CD14-positive monocyte (primary cell): ENCODE measurements at regions of chr9 and their contacts with region 1.

Region 1: DNA sequence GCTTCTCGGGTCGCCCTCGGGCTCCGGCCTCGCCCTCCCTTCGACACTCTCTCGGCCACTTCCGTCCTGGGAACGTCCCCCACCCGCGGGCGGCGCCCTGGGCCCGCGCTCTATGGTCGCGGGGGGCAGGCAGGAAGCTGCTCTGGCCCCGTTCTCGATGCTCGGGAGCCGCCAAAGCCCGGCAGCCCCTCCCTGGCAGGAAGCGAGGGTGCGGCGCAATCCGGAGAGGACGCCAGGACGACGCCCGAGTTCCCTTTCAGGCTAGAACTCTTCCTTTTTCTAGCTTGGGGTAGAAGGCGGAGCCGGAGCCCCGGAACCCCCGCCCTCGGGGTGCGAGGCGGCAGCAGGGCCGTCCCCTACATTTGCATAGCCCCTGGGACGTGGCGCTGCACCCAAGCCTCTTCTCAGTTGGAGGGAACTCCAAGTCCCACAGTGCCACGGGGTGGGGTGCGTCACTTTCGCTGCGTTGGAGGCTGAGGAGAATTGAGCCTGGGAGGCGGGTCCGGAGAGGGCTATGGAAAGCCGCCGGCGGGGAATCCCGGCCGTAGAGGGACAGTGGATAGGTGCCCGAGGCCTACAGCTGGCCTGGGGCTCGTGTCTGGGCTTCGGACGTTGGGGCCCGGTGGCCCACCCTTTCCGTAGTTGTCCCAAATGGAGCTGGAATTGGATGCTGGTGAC is at the starts of genes CREB3 and TLN1:
- DNase-seq: peak; percentile 98 to 99 (median 98)
- H3K4me3 ChIP-seq: peak within 1 kb of the TSS; percentile 84 to 95 (median 85)
- H3K4me3 Mint-ChIP-seq: peak within 1 kb of the TSS in 1 of 2 donors; percentile 92
- H3K27ac ChIP-seq: peak within 1 kb of the TSS; percentile 89 to 95
- H3K27ac Mint-ChIP-seq: peak within 1 kb of the TSS in 6 of 7 donors; percentile 94 to 99 (median 96)
- H3K4me1 ChIP-seq: peaks cover 57 to 65% of the 10 kb centered on the region in 2 donors
- H3K4me1 Mint-ChIP-seq: peaks cover 21% of the 10 kb centered on the region
- H3K27me3 ChIP-seq: no peaks in the 10 kb centered on the region
- H3K27me3 Mint-ChIP-seq: peaks cover 0 to 5% (median 0%) of the 10 kb centered on the region in 3 donors
- CTCF ChIP-seq: no peak
- polyA plus RNA-seq, gene CREB3: 17.4 to 38.7 (median 32.2) TPM
- polyA plus RNA-seq, gene TLN1: 46.6 to 251 (median 93.0) TPM

Region 2: DNA sequence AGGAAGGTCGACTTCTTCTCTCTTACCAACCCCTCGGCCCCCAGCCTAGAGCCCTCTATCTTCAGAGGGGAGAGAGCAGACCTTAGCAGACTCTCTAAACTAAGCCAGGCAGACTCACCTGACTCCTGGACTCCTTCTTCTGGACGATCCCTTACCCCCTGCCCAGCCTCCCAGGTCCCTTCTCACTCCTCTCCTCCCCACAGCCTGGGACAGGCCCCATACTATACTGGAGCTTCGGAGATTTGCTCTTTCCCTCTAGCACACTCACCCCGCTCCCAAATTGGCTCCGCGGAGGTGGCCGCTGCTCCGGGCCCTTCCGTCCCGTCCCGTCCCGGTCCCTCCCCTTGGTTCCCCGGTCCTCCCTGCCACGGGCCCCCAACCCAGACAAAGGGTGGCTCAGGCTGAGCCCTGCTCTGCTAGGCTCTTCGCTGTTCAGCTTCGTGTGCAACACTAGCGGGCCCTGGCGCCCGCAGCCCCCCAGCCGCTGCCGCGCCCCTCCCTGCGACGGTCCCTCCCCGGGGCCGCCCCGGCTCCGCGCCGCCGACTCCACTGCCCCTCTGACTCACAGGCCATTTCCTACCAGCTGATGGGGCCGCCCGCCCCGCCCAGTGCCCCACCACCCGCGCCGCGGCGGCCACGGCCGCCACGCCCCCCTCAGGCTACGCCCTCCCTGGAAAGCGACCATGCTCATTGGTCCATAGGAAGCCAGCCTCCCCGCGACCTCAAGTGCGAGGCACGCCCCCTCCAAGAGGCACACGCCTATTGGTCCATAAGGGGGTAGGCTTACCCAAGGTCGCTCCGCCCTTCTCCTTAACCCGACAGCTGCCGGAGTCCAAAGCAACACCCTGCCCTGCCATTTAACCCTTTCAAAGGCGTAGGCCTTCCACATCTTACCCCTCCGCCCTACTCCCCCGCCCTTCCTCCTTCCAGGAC is 621.0 kb before region 1 on chr9:
- intact Hi-C with region 1: loop called in 1 of 2 experiments (anchors 5 kb)
- DNase-seq: peak; percentile 98 to 99 (median 99)
- H3K4me3 ChIP-seq: peak overlapping the region; percentile 68 to 77 (median 69)
- H3K4me3 Mint-ChIP-seq: peak overlapping the region; percentile 86 to 96
- H3K27ac ChIP-seq: peak overlapping the region; percentile 94 to 95
- H3K27ac Mint-ChIP-seq: peak overlapping the region; percentile 99 to 100 (median 100)
- H3K4me1 ChIP-seq: peaks cover 50 to 58% of the 10 kb centered on the region in 2 donors
- H3K4me1 Mint-ChIP-seq: peaks cover 52% of the 10 kb centered on the region
- H3K27me3 ChIP-seq: no peaks in the 10 kb centered on the region
- H3K27me3 Mint-ChIP-seq: peaks cover 0 to 8% (median 0%) of the 10 kb centered on the region in 3 donors
- CTCF ChIP-seq: no peak

Region 3: GRCh38 chr9:35603987-35604577 is 128.2 kb before region 1 on chr9:
- intact Hi-C with region 1: loop called (anchors 10 kb)
- DNase-seq: peak; percentile 100
- H3K4me3 ChIP-seq: peak overlapping the region; percentile 57 to 98 (median 69)
- H3K4me3 Mint-ChIP-seq: peak overlapping the region; percentile 97 to 98
- H3K27ac ChIP-seq: peak overlapping the region; percentile 78 to 90
- H3K27ac Mint-ChIP-seq: peak overlapping the region; percentile 96 to 99 (median 99)
- H3K4me1 ChIP-seq: peaks cover 33 to 42% of the 10 kb centered on the region in 2 donors
- H3K4me1 Mint-ChIP-seq: peaks cover 34% of the 10 kb centered on the region
- H3K27me3 ChIP-seq: no peaks in the 10 kb centered on the region
- H3K27me3 Mint-ChIP-seq: peaks cover 0 to 2% (median 0%) of the 10 kb centered on the region in 3 donors
- CTCF ChIP-seq: peak; percentile 96

Region 4: DNA sequence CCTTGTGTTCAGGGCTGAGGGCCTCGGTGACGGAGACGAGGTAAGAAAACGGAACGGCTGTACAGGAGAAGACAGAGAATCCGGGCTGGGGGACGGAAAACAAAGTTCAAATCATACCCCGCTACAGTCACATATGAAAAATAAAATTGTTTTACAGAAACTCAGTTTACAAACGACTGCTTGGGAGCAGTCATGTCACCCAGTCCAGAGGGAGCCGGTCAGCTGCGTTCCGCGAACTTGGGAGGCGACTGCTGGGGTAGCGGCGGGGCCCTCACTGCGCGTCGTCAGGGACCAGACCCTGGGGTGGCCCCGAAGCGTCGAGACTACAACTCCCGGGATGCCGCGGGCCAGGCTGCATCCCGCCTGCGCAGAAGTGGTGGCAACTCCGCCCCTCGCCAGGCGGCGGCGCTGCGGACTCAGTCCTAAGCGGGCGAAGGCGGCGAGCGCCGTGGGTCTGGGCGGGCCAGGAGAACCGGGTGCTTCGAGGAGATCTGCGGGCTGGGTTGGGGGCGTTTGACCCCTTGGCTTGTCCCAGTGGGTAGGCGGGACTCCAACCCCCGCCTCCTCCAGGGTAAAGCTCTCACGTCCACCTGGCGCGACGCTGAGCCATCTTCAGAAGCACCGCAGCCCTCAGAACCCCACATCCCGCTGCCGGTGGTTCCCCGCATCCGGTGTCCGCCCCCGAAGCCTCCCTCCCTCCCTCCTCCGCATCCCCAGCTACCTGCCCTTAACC is 85.6 kb before region 1 on chr9:
- intact Hi-C with region 1: loop called in 1 of 2 experiments (anchors 5 kb)
- DNase-seq: peak; percentile 89 to 91 (median 90)
- H3K4me3 ChIP-seq: peak overlapping the region; percentile 65 to 81 (median 71)
- H3K4me3 Mint-ChIP-seq: peak overlapping the region; percentile 92 to 99
- H3K27ac ChIP-seq: peak overlapping the region; percentile 89 to 94
- H3K27ac Mint-ChIP-seq: peak overlapping the region; percentile 94 to 99 (median 98)
- H3K4me1 ChIP-seq: peaks cover 57 to 78% of the 10 kb centered on the region in 2 donors
- H3K4me1 Mint-ChIP-seq: peaks cover 71% of the 10 kb centered on the region
- H3K27me3 ChIP-seq: no peaks in the 10 kb centered on the region
- H3K27me3 Mint-ChIP-seq: peaks cover 0 to 8% (median 0%) of the 10 kb centered on the region in 3 donors
- CTCF ChIP-seq: peak; percentile 97

Region 5: GRCh38 chr9:35657546-35658136 is 74.6 kb before region 1 on chr9 and contains the start of gene RMRP:
- intact Hi-C with region 1: loop called in 1 of 2 experiments (anchors 5 kb)
- DNase-seq: peak; percentile 94 to 99 (median 95)
- H3K4me3 ChIP-seq: peak within 1 kb of the TSS; percentile 83 to 94 (median 88)
- H3K4me3 Mint-ChIP-seq: peak within 1 kb of the TSS; percentile 87 to 90
- H3K27ac ChIP-seq: peak within 1 kb of the TSS; percentile 85 to 98
- H3K27ac Mint-ChIP-seq: peak within 1 kb of the TSS; percentile 95 to 100 (median 98)
- H3K4me1 ChIP-seq: peaks cover 29 to 43% of the 10 kb centered on the region in 2 donors
- H3K4me1 Mint-ChIP-seq: peaks cover 43% of the 10 kb centered on the region
- H3K27me3 ChIP-seq: no peaks in the 10 kb centered on the region
- H3K27me3 Mint-ChIP-seq: peaks cover 0 to 8% (median 5%) of the 10 kb centered on the region in 3 donors
- CTCF ChIP-seq: no peak
- polyA plus RNA-seq, gene RMRP: 13.3 TPM in 1 of 3 donors, not detected in the others

Region 6: DNA sequence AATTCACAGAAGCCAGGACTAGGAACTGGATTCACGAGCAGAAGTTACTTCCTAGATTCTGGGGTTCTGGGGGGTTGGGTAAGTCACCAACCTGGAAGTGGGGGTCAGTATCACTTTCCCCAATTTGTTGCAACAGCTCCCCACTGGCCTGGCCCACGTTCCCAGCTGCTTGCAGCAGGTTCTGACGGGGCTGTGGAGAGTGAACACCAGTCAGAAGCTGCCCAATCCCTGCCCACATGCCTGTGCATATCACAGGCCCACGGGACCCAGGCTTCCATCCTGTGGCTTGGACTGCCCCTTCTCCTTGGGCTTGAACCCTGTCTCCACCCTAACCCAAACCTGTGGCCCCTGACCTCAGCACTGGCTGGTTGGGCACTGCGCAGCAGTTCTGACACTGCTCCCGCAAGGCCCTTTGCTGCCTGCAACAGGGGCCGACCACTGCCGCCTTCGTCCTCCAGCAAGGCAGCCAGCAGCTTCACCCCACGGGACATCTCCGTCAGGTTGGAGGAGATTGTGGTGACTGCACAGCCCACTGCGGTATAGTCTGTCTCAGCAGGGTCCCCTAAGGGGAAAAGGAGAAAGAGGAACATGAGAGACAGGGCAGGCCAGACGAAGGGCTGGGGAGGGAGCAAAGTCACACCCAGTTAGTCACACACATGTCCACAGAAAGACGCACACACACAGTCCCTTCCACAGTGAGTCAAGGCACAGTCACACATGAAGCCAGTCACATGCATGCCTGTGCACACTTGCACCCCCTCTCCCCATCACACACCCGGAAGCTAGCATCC is 13.3 kb before region 1 on chr9:
- intact Hi-C with region 1: no loop called
- DNase-seq: peak in 1 of 3 donors; percentile 31
- H3K4me3 ChIP-seq: no peak overlapping the region
- H3K4me3 Mint-ChIP-seq: no peak overlapping the region
- H3K27ac ChIP-seq: peak overlapping the region in 1 of 2 donors; percentile 50
- H3K27ac Mint-ChIP-seq: peak overlapping the region in 3 of 7 donors; percentile 17 to 86 (median 37)
- H3K4me1 ChIP-seq: no peaks in the 10 kb centered on the region
- H3K4me1 Mint-ChIP-seq: no peaks in the 10 kb centered on the region
- H3K27me3 ChIP-seq: no peaks in the 10 kb centered on the region
- H3K27me3 Mint-ChIP-seq: peaks cover 0 to 1% (median 0%) of the 10 kb centered on the region in 3 donors
- CTCF ChIP-seq: no peak

Region 7: GRCh38 chr9:35748858-35749514 is 16.7 kb after region 1 on chr9 and contains the starts of genes GBA2 and RGP1:
- intact Hi-C with region 1: loop called (anchors 2 kb)
- DNase-seq: peak; percentile 61 to 62 (median 62)
- H3K4me3 ChIP-seq: peak within 1 kb of the TSS; percentile 86 to 90 (median 89)
- H3K4me3 Mint-ChIP-seq: peak within 1 kb of the TSS; percentile 95
- H3K27ac ChIP-seq: peak within 1 kb of the TSS; percentile 59 to 80
- H3K27ac Mint-ChIP-seq: peak within 1 kb of the TSS; percentile 86 to 95 (median 91)
- H3K4me1 ChIP-seq: peaks cover 46 to 50% of the 10 kb centered on the region in 2 donors
- H3K4me1 Mint-ChIP-seq: peaks cover 49% of the 10 kb centered on the region
- H3K27me3 ChIP-seq: no peaks in the 10 kb centered on the region
- H3K27me3 Mint-ChIP-seq: peaks cover 0 to 2% (median 0%) of the 10 kb centered on the region in 3 donors
- CTCF ChIP-seq: no peak
- polyA plus RNA-seq, gene GBA2: 18.1 to 130 (median 26.4) TPM
- polyA plus RNA-seq, gene RGP1: 2.3 to 9.0 (median 3.3) TPM

Region 8: DNA sequence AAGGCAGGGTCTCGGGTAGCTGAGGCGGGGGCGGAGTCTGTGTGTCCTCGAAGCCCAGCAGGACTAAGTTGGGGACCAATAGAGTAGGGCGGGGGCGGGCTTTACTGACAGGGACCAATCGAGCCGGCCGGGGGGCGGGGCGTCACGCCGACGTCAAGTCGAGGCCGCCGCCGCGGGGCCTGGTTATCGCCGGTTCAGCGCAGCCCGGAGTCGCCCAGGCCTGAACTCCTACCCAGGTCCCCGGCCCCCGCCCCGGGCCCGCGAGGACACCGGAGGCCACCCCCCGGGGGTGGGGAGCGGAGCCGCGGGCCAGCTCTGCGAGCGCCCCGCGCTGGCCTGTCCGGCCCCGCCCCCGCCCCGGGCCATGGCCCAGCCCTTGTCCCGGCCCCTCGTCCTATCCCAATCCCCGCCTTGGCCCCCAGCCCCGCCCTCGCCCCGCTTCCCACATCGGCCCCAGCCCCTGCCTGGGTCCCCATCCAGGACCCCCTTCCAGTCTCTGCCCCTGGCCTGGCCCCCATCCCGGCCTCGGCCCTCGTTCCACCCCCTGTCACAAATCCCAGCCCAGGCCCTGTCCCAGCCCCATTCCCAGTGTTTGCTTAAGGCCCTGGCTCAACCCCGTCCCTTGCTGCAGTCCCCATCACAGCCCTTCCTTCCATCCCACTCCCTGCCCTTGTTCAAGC is 97.0 kb after region 1 on chr9 and contains the start of gene TMEM8B:
- intact Hi-C with region 1: loop called in 1 of 2 experiments (anchors 5 kb)
- DNase-seq: peak; percentile 80 to 92 (median 85)
- H3K4me3 ChIP-seq: peak within 1 kb of the TSS; percentile 67 to 94 (median 78)
- H3K4me3 Mint-ChIP-seq: peak within 1 kb of the TSS; percentile 94 to 99
- H3K27ac ChIP-seq: peak within 1 kb of the TSS; percentile 10 to 73
- H3K27ac Mint-ChIP-seq: peak within 1 kb of the TSS; percentile 81 to 99 (median 92)
- H3K4me1 ChIP-seq: peaks cover 53 to 64% of the 10 kb centered on the region in 2 donors
- H3K4me1 Mint-ChIP-seq: peaks cover 65% of the 10 kb centered on the region
- H3K27me3 ChIP-seq: no peaks in the 10 kb centered on the region
- H3K27me3 Mint-ChIP-seq: peaks cover 14 to 18% (median 17%) of the 10 kb centered on the region in 3 donors
- CTCF ChIP-seq: no peak
- polyA plus RNA-seq, gene TMEM8B: 2.6 to 11.6 (median 3.8) TPM